ENCODE measurements at regions of chr2 and their contacts with region 1.

Region 1: GRCh38 chr2:72150157-72150865 is 2.6 kb upstream of the CYP26B1 start:
- DNase-seq: no peak
- ATAC-seq: peak; percentile 66
- H3K4me3 Mint-ChIP-seq: peak overlapping the region; percentile 80
- H3K27ac Mint-ChIP-seq: peak overlapping the region; percentile 19
- H3K4me1 Mint-ChIP-seq: peaks cover 41% of the 10 kb centered on the region
- H3K27me3 Mint-ChIP-seq: peaks cover 65% of the 10 kb centered on the region
- CTCF ChIP-seq: no peak

Region 2: GRCh38 chr2:71545572-71546274 is 604.6 kb before region 1 on chr2:
- CTCF ChIA-PET with region 1: interaction called, 6 read pairs
- POLR2A ChIA-PET with region 1: no interaction called
- intact Hi-C with region 1: loop called (anchors 1 kb)
- DNase-seq: no peak
- ATAC-seq: peak; percentile 52
- H3K4me3 Mint-ChIP-seq: peak overlapping the region; percentile 60
- H3K27ac Mint-ChIP-seq: no peak overlapping the region
- H3K4me1 Mint-ChIP-seq: peaks cover 7% of the 10 kb centered on the region
- H3K27me3 Mint-ChIP-seq: peaks cover 29% of the 10 kb centered on the region
- CTCF ChIP-seq: no peak

Region 3: GRCh38 chr2:71923887-71924533 is 226.3 kb before region 1 on chr2:
- CTCF ChIA-PET with region 1: interaction called, 19 read pairs
- POLR2A ChIA-PET with region 1: no interaction called
- intact Hi-C with region 1: no loop called
- DNase-seq: no peak
- ATAC-seq: peak; percentile 37
- H3K4me3 Mint-ChIP-seq: no peak overlapping the region
- H3K27ac Mint-ChIP-seq: no peak overlapping the region
- H3K4me1 Mint-ChIP-seq: no peaks in the 10 kb centered on the region
- H3K27me3 Mint-ChIP-seq: no peaks in the 10 kb centered on the region
- CTCF ChIP-seq: no peak

Region 4: DNA sequence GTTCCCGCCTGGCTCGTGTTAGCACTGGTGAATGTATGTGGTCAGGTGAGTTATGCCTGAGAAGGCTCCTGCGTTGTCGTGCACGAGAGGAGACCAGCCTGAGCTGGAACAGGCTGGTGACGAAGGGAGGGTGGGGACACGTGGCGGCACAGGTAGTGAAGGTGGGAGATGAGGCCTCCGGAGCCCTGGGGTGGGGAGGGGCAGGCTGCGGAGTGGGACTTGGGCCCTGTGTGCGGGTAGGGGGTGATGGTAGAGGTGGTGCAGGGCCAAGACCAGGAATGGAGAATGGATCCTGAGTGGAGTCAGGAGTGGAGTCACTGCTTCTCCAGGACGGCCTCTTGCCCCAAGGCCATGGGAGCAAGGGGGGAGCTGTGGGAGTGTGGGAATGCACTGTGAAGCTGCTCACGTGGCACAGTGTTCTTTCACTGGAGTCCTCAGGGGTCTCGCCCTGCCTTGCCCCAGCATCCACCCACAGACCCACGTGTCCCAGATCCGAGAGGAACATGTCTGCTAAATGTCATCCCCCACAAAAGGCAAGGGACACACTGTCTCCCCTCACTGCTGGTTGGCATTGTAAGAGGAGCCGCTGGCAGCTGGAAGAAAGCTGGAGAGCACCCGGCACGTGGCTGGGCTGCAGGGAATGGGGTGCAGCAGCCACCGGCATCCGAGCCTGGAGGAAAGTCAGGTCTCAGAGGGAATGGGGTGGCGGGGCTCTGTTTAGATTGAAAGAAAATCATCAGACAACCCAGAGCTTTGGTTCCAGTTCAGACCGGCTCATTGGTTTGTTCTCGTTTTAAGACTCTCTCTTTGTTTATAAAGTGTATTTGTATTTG is 66.3 kb before region 1 on chr2:
- CTCF ChIA-PET with region 1: no interaction called
- POLR2A ChIA-PET with region 1: no interaction called
- intact Hi-C with region 1: no loop called
- DNase-seq: no peak
- ATAC-seq: no peak
- H3K4me3 Mint-ChIP-seq: no peak overlapping the region
- H3K27ac Mint-ChIP-seq: no peak overlapping the region
- H3K4me1 Mint-ChIP-seq: no peaks in the 10 kb centered on the region
- H3K27me3 Mint-ChIP-seq: no peaks in the 10 kb centered on the region
- CTCF ChIP-seq: no peak

Region 5: DNA sequence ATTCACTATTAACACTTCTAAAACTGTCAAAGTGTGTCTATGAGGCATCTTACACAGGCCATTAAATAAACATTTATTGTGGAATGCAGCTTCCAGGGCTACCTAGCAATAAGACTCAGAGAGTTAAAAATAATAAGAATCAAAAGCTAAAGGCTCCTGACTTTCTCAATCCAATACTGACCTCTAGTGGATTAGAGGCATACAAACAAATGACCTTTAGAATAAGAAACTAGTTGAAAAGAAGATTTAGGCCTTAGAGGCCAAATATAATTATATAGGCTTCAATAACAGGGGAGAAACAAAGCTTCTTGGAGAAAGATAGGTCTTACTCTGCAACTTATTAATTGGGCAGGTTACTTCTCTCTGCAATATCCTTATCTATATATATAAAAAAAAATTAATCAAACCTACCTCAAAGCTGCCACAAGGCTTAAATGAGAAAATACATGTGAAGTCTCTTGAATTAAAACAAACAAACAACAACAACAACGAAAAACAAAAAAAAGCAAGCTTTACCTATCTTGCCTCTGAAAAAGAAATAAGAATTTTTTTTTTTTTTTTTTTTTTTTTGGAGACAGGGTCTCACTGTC is 429.4 kb after region 1 on chr2:
- CTCF ChIA-PET with region 1: no interaction called
- POLR2A ChIA-PET with region 1: no interaction called
- intact Hi-C with region 1: loop called (anchors 10 kb)
- DNase-seq: no peak
- ATAC-seq: no peak
- H3K4me3 Mint-ChIP-seq: no peak overlapping the region
- H3K27ac Mint-ChIP-seq: no peak overlapping the region
- H3K4me1 Mint-ChIP-seq: no peaks in the 10 kb centered on the region
- H3K27me3 Mint-ChIP-seq: no peaks in the 10 kb centered on the region
- CTCF ChIP-seq: no peak

Region 6: GRCh38 chr2:72915907-72916742 is 765.8 kb after region 1 on chr2:
- CTCF ChIA-PET with region 1: no interaction called
- POLR2A ChIA-PET with region 1: no interaction called
- intact Hi-C with region 1: loop called (anchors 5 kb)
- DNase-seq: peak; percentile 48
- ATAC-seq: peak; percentile 50
- H3K4me3 Mint-ChIP-seq: peak overlapping the region; percentile 81
- H3K27ac Mint-ChIP-seq: no peak overlapping the region
- H3K4me1 Mint-ChIP-seq: peaks cover 35% of the 10 kb centered on the region
- H3K27me3 Mint-ChIP-seq: peaks cover 65% of the 10 kb centered on the region
- CTCF ChIP-seq: no peak

Region 7: DNA sequence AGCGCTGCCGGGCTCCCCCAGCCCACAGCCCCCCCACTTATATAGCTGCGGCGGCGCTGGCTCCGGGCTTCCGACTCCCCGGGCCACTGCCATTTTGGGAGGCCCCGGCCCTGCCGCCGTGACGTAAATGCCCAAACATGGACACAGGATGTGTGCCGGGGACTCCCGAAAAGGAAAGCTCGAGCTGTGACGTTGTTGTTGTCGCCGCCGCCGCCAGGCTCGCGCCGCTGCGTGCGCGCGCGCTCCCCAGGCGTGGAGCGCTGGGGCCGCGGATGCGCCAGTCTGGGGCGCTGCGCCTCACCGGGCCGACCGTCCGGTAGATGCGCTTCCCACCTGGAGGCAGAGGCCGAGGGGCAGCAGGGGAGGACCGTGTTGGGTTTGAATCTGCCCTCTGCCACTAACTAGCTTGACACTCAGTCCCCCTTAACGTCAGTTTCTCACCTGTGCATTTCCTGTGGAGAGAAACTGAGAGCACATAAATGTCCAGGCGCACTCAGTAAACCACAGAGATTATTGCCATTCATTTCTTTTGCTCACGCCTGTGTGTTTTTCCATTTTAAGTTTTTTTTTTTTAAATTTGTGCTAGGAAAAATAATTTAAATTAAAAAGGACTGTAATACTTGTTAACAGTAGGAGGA is 1143.3 kb after region 1 on chr2 and contains the start of gene EGR4:
- CTCF ChIA-PET with region 1: no interaction called
- POLR2A ChIA-PET with region 1: no interaction called
- intact Hi-C with region 1: loop called (anchors 10 kb)
- DNase-seq: peak; percentile 68
- ATAC-seq: peak; percentile 87
- H3K4me3 Mint-ChIP-seq: peak within 1 kb of the TSS; percentile 77
- H3K27ac Mint-ChIP-seq: no peak within 1 kb of the TSS
- H3K4me1 Mint-ChIP-seq: peaks cover 28% of the 10 kb centered on the region
- H3K27me3 Mint-ChIP-seq: peaks cover 41% of the 10 kb centered on the region
- CTCF ChIP-seq: no peak
- total RNA-seq, gene EGR4: 0.20 TPM in 1 of 2 replicates, not detected in the other